Psoas muscle (tissue), 8 donors: ENCODE measurements at regions of chr14 and their contacts with region 1.

Region 1: GRCh38 chr14:26636561-26636960 is 38.7 kb upstream of the NOVA1 start:
- DNase-seq: no peak
- ATAC-seq: no peak
- H3K4me3 ChIP-seq: no peak overlapping the region
- H3K27ac ChIP-seq: no peak overlapping the region
- H3K4me1 ChIP-seq: no peaks in the 10 kb centered on the region
- H3K27me3 ChIP-seq: no peaks in the 10 kb centered on the region
- CTCF ChIP-seq: no peak

Region 2: GRCh38 chr14:26577711-26578110 is 58.9 kb before region 1 on chr14:
- intact Hi-C with region 1: loop called in 1 of 2 experiments (anchors 5 kb)
- DNase-seq: no peak
- ATAC-seq: no peak
- H3K4me3 ChIP-seq: no peak overlapping the region
- H3K27ac ChIP-seq: no peak overlapping the region
- H3K4me1 ChIP-seq: no peaks in the 10 kb centered on the region
- H3K27me3 ChIP-seq: no peaks in the 10 kb centered on the region
- CTCF ChIP-seq: no peak